ENCODE measurements at regions of chr12 and their contacts with region 1.

Region 1: GRCh38 chr12:104986022-104986941 is at the start of gene NOPCHAP1:
- DNase-seq: peak; percentile 83
- H3K4me3 Mint-ChIP-seq: peak within 1 kb of the TSS; percentile 89
- H3K27ac Mint-ChIP-seq: peak within 1 kb of the TSS; percentile 57
- H3K4me1 Mint-ChIP-seq: peaks cover 44% of the 10 kb centered on the region
- H3K27me3 Mint-ChIP-seq: peaks cover 3% of the 10 kb centered on the region
- total RNA-seq, gene NOPCHAP1: 28.0 and 40.0 TPM in 2 replicates

Region 2: GRCh38 chr12:104998423-104999346 is 12.4 kb after region 1 on chr12:
- intact Hi-C with region 1: no loop called
- DNase-seq: no peak
- H3K4me3 Mint-ChIP-seq: no peak overlapping the region
- H3K27ac Mint-ChIP-seq: no peak overlapping the region
- H3K4me1 Mint-ChIP-seq: no peaks in the 10 kb centered on the region
- H3K27me3 Mint-ChIP-seq: no peaks in the 10 kb centered on the region

Region 3: GRCh38 chr12:105030820-105031807 is 44.8 kb after region 1 on chr12:
- intact Hi-C with region 1: loop called (anchors 5 kb)
- DNase-seq: no peak
- H3K4me3 Mint-ChIP-seq: no peak overlapping the region
- H3K27ac Mint-ChIP-seq: peak overlapping the region; percentile 42
- H3K4me1 Mint-ChIP-seq: peaks cover 33% of the 10 kb centered on the region
- H3K27me3 Mint-ChIP-seq: no peaks in the 10 kb centered on the region

Measured in activated T-helper 1 cell treated with anti-CD3 and anti-CD28 coated beads, Interleukin-12 subunit alpha, Interleukin-12 subunit beta, Interleukin-2, Interleukin-4 antibody, amounts not matched to agents 30 ng/mL and 10 ng/mL and 1 ng/mL, durations not matched to agents 14 hours and 24 hours and 36 hours (primary cell).